Activated CD4-positive, alpha-beta memory T cell treated with anti-CD3 and anti-CD28 coated beads for 36 hours (primary cell): ENCODE measurements at regions of chr10 and their contacts with region 1.

Region 1: DNA sequence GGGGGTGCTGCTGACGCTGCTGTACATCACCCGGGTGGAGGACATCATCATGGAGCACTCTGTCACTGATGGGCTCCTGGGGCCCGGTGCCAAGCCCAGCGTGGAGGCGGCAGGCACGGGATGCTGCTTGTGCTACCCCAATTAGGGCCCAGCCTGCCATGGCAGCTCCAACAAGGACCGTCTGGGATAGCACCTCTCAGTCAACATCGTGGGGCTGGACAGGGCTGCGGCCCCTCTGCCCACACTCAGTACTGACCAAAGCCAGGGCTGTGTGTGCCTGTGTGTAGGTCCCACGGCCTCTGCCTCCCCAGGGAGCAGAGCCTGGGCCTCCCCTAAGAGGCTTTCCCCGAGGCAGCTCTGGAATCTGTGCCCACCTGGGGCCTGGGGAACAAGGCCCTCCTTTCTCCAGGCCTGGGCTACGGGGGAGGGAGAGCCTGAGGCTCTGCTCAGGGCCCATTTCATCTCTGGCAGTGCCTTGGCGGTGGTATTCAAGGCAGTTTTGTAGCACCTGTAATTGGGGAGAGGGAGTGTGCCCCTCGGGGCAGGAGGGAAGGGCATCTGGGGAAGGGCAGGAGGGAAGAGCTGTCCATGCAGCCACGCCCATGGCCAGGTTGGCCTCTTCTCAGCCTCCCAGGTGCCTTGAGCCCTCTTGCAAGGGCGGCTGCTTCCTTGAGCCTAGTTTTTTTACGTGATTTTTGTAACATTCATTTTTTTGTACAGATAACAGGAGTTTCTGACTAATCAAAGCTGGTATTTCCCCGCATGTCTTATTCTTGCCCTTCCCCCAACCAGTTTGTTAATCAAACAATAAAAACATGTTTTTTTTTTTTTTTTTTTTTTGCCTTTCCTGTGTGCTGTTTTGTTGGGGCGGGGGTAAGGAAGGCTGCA is 55.8 kb downstream of the TSPAN15 start:
- DNase-seq: no peak
- H3K4me3 Mint-ChIP-seq: peak overlapping the region; percentile 54
- H3K27ac Mint-ChIP-seq: peak overlapping the region; percentile 64
- H3K4me1 Mint-ChIP-seq: peaks cover 10% of the 10 kb centered on the region
- H3K27me3 Mint-ChIP-seq: no peaks in the 10 kb centered on the region

Region 2: GRCh38 chr10:68988530-68989316 is 518.4 kb before region 1 on chr10 and contains the start of gene KIFBP:
- CTCF ChIA-PET with region 1: no interaction called
- POLR2A ChIA-PET with region 1: no interaction called
- intact Hi-C with region 1: loop called (anchors 10 kb)
- DNase-seq: peak; percentile 93
- H3K4me3 Mint-ChIP-seq: peak within 1 kb of the TSS; percentile 92
- H3K27ac Mint-ChIP-seq: peak within 1 kb of the TSS; percentile 83
- H3K4me1 Mint-ChIP-seq: peaks cover 49% of the 10 kb centered on the region
- H3K27me3 Mint-ChIP-seq: no peaks in the 10 kb centered on the region
- total RNA-seq, gene KIFBP: 23.0 to 25.2 TPM

Region 3: DNA sequence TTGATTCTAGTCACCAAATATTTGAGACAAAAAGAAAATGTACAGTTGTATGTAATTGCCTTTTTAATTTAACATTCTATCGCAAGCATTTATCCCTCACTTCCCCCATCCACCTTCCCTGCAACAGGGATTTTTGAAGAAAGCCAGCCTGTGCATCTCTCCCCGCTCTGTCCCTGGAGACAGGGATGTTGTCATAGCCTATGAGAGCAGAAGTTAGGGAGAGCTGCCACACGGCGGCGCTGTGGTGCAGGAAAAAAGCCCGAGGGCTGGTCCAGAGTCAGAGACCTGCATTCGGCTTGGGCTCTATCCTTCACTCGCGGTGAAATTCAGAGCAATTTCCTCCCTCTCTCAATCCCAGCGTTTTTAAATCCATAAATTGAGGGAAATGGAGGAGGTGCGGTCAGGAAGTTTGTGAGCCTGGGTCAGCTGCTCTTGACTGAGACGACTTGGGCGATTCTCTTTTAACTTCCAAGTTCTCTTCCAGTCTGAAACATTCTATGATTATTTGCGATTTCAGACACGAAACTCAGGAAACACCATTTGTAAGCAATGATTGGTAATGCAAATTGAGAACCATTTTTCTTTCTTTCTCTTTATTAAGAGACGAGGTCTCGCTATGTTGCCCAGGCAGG is 269.4 kb before region 1 on chr10:
- CTCF ChIA-PET with region 1: interaction called, 5 read pairs
- POLR2A ChIA-PET with region 1: no interaction called
- intact Hi-C with region 1: loop called (anchors 5 kb)
- DNase-seq: peak; percentile 93
- H3K4me3 Mint-ChIP-seq: no peak overlapping the region
- H3K27ac Mint-ChIP-seq: no peak overlapping the region
- H3K4me1 Mint-ChIP-seq: peaks cover 23% of the 10 kb centered on the region
- H3K27me3 Mint-ChIP-seq: no peaks in the 10 kb centered on the region

Region 4: DNA sequence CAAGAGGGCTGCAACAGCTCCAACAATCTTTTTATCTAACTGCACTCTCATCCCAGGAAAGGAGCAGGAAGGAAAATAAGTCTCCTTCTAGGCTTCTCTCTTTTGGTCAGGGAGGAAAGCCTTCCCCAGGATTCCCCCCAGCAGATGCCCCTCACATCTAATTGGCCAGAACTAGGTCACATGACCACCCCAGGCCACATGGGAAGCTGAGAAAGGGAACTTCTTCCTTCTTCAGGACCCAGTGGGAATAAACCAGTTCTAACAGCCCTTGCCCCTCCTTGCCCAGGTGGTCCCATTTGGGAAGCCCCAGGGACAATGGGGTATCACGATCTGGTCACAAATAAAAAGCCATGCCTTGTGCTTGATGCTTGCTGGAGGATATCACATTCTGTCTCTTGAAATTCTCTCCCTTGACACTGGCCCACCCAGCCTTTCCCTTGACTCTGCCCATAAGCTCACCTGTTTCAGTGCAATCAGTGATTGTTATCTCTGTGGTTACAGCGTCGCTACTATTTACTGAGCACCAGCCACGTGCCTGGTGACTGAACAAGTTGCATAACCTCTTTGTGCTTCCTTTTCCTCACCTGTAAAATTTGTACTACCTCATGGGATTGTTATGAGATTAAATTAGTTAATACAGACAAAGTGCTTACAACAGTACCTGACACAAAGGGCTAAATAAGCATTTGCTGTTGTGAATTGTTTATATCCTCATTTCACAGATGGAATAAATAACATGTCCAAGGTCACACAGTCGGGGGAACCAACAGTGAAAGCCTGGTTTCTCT is 81.4 kb before region 1 on chr10:
- CTCF ChIA-PET with region 1: interaction called, 15 read pairs
- POLR2A ChIA-PET with region 1: no interaction called
- intact Hi-C with region 1: loop called (anchors 1 kb)
- DNase-seq: peak; percentile 35
- H3K4me3 Mint-ChIP-seq: no peak overlapping the region
- H3K27ac Mint-ChIP-seq: peak overlapping the region; percentile 54
- H3K4me1 Mint-ChIP-seq: peaks cover 49% of the 10 kb centered on the region
- H3K27me3 Mint-ChIP-seq: no peaks in the 10 kb centered on the region

Region 5: DNA sequence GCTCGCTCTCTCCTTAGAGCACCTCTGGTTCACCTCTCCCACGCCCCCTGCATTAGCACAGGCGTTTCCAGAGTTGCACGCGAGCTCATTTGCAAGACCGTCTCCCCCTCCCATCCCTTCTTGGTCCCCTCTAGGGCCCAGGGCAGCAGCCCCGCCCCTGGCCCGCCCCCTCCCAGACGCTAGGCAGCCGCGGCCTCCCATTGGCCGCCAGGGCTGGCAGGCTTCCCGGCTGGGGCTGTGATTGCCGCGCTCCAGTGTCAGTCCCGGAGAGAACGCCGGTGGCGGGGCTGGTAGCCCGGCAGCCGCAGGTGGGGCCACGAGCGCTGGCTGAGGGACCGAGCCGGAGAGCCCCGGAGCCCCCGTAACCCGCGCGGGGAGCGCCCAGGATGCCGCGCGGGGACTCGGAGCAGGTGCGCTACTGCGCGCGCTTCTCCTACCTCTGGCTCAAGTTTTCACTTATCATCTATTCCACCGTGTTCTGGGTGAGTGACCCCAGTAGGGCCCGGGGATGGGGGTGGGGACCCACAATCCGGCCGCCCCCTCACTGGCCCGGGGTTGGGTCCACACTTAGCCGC is 55.8 kb before region 1 on chr10 and contains the start of gene TSPAN15:
- CTCF ChIA-PET with region 1: interaction called, 9 read pairs
- POLR2A ChIA-PET with region 1: no interaction called
- intact Hi-C with region 1: loop called (anchors 5 kb)
- DNase-seq: peak; percentile 88
- H3K4me3 Mint-ChIP-seq: peak within 1 kb of the TSS; percentile 82
- H3K27ac Mint-ChIP-seq: no peak within 1 kb of the TSS
- H3K4me1 Mint-ChIP-seq: peaks cover 14% of the 10 kb centered on the region
- H3K27me3 Mint-ChIP-seq: no peaks in the 10 kb centered on the region
- total RNA-seq, gene TSPAN15: 2.5 to 3.1 TPM

Region 6: GRCh38 chr10:69527961-69528360 is 20.9 kb after region 1 on chr10:
- CTCF ChIA-PET with region 1: no interaction called
- POLR2A ChIA-PET with region 1: no interaction called
- intact Hi-C with region 1: no loop called
- DNase-seq: no peak
- H3K4me3 Mint-ChIP-seq: no peak overlapping the region
- H3K27ac Mint-ChIP-seq: no peak overlapping the region
- H3K4me1 Mint-ChIP-seq: no peaks in the 10 kb centered on the region
- H3K27me3 Mint-ChIP-seq: peaks cover 2% of the 10 kb centered on the region

Region 7: DNA sequence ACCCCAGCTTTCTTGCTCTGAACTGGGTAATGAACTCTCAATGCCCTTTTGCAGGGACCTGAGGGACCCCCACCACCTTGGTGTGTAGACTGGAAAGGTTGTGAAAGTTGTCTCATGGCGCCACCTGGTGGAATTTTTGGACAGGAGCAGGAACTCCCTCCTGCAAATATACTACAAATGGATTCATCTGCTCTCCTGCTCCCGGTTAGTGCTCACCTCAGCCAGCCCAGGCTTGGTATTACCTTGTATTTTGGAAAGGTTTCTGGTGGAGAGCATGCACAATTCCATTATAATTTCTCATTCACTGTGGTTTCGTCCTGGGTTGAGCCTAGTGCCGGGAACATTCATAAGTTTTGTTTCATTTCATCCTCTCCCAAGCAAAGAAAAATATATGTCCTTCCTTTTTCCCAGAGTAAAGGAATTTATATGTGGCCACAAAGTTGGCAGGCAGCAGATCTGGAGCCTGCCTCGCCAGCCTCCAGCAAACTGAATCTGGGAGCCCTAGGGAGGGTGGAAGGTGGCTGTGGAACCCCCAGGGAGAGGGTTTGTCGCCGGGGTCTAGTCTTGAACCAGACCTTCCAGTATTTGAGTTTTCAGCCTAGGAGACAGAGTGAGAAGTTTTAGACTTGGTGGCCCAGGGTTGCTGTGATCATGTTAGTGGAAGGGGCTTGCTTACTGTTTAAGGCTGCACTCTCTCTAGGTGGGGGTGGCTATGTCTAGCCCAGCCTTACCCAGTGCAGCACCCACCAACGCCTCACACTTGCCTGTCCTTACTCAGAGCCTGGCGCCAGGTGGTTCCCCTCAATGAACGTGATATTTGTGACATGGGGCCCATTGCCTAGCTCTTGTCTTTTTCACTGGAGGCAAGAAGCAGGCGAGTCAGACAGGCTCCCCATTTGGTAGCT is 132.5 kb after region 1 on chr10:
- CTCF ChIA-PET with region 1: interaction called, 247 read pairs
- POLR2A ChIA-PET with region 1: no interaction called
- intact Hi-C with region 1: no loop called
- DNase-seq: peak; percentile 76
- H3K4me3 Mint-ChIP-seq: no peak overlapping the region
- H3K27ac Mint-ChIP-seq: no peak overlapping the region
- H3K4me1 Mint-ChIP-seq: no peaks in the 10 kb centered on the region
- H3K27me3 Mint-ChIP-seq: no peaks in the 10 kb centered on the region